Gastrocnemius medialis (tissue), 4 donors: ENCODE measurements at regions of chr17 and their contacts with region 1.

Region 1: GRCh38 chr17:10888858-10889257 is 51.0 kb upstream of the PIRT start:
- DNase-seq: no peak
- ATAC-seq: no peak
- H3K4me3 ChIP-seq: no peak overlapping the region
- H3K27ac ChIP-seq: no peak overlapping the region
- H3K4me1 ChIP-seq: no peaks in the 10 kb centered on the region
- H3K27me3 ChIP-seq: peaks cover 0 to 3% (median 0%) of the 10 kb centered on the region in 3 donors
- CTCF ChIP-seq: no peak
- POLR2A ChIP-seq: no peak

Region 2: DNA sequence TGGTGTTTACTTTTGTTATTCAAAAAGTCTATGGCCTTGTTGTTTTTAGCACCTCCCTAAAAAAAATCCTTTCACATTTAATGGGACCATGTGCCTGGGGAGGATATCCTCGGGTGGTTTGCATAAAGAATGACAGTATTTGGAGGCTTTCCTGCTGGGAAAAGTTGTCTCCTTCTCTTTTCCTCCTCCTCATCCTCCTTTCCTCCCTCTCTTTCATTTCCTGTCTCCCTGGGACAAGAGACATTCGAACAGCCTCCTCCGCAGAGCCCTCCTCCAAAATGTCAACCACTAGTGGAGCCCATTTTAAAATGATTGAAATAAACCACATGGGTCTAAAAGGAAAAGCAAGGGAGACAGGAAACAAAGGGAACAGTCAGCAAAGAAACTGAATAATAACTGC is 583.5 kb before region 1 on chr17:
- in situ Hi-C with region 1: no loop called
- intact Hi-C with region 1: no loop called
- DNase-seq: no peak
- ATAC-seq: no peak
- H3K4me3 ChIP-seq: no peak overlapping the region
- H3K27ac ChIP-seq: no peak overlapping the region
- H3K4me1 ChIP-seq: no peaks in the 10 kb centered on the region
- H3K27me3 ChIP-seq: no peaks in the 10 kb centered on the region
- CTCF ChIP-seq: no peak
- POLR2A ChIP-seq: no peak

Region 3: GRCh38 chr17:11138023-11138422 is 249.2 kb after region 1 on chr17:
- in situ Hi-C with region 1: loop called in 2 of 4 experiments (anchors 10 to 25 kb)
- intact Hi-C with region 1: no loop called
- DNase-seq: no peak
- ATAC-seq: no peak
- H3K4me3 ChIP-seq: peak overlapping the region in 1 of 4 donors; percentile 3
- H3K27ac ChIP-seq: no peak overlapping the region
- H3K4me1 ChIP-seq: no peaks in the 10 kb centered on the region
- H3K27me3 ChIP-seq: no peaks in the 10 kb centered on the region
- CTCF ChIP-seq: no peak
- POLR2A ChIP-seq: no peak

Region 4: DNA sequence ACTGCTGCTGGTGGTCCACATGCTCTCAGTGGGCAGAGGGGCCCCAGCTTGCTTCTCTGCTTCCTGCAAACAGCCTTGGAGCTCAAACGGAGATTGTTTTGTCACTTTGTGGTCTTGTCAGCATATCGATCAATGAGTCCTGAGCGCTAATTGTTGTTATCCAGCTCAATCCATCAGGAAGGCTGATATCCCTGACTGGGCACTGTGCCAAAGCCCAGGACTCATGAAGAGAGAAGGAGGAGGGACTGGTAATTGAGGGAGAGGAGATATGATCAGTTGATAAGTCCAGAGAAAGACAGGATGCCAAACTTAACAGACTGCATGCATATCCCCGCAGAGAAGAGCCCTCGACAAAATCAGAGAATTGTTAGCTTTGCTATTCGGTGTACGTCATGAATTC is 650.8 kb after region 1 on chr17:
- in situ Hi-C with region 1: no loop called
- intact Hi-C with region 1: no loop called
- DNase-seq: no peak
- ATAC-seq: no peak
- H3K4me3 ChIP-seq: no peak overlapping the region
- H3K27ac ChIP-seq: no peak overlapping the region
- H3K4me1 ChIP-seq: no peaks in the 10 kb centered on the region
- H3K27me3 ChIP-seq: no peaks in the 10 kb centered on the region
- CTCF ChIP-seq: no peak
- POLR2A ChIP-seq: no peak